CD4-positive, alpha-beta T cell (primary cell): ENCODE measurements at regions of chr17 and their contacts with region 1.

Region 1: GRCh38 chr17:73429440-73430164 is 117.8 kb upstream of the CDC42EP4 start:
- DNase-seq: peak; percentile 74 to 94 (median 87)
- ATAC-seq: peak; percentile 97
- H3K4me3 ChIP-seq: no peak overlapping the region
- H3K4me3 Mint-ChIP-seq: peak overlapping the region; percentile 35
- H3K27ac ChIP-seq: no peak overlapping the region
- H3K27ac Mint-ChIP-seq: no peak overlapping the region
- H3K4me1 ChIP-seq: peaks cover 9% of the 10 kb centered on the region
- H3K4me1 Mint-ChIP-seq: peaks cover 14% of the 10 kb centered on the region
- H3K27me3 ChIP-seq: no peaks in the 10 kb centered on the region
- H3K27me3 Mint-ChIP-seq: no peaks in the 10 kb centered on the region
- CTCF ChIP-seq: peak; percentile 89

Region 2: GRCh38 chr17:73645050-73645978 is 215.7 kb after region 1 on chr17:
- CTCF ChIA-PET with region 1: interaction called, 3 read pairs
- POLR2A ChIA-PET with region 1: no interaction called
- intact Hi-C with region 1: loop called (anchors 1 to 2 kb)
- DNase-seq: peak in 11 of 14 experiments; percentile 13 to 72 (median 48)
- ATAC-seq: peak; percentile 57
- H3K4me3 ChIP-seq: no peak overlapping the region
- H3K4me3 Mint-ChIP-seq: peak overlapping the region; percentile 90
- H3K27ac ChIP-seq: no peak overlapping the region
- H3K27ac Mint-ChIP-seq: no peak overlapping the region
- H3K4me1 ChIP-seq: peaks cover 29% of the 10 kb centered on the region
- H3K4me1 Mint-ChIP-seq: peaks cover 22% of the 10 kb centered on the region
- H3K27me3 ChIP-seq: peaks cover 13 to 32% of the 10 kb centered on the region in 2 experiments
- H3K27me3 Mint-ChIP-seq: peaks cover 7% of the 10 kb centered on the region
- CTCF ChIP-seq: peak; percentile 14

Region 3: DNA sequence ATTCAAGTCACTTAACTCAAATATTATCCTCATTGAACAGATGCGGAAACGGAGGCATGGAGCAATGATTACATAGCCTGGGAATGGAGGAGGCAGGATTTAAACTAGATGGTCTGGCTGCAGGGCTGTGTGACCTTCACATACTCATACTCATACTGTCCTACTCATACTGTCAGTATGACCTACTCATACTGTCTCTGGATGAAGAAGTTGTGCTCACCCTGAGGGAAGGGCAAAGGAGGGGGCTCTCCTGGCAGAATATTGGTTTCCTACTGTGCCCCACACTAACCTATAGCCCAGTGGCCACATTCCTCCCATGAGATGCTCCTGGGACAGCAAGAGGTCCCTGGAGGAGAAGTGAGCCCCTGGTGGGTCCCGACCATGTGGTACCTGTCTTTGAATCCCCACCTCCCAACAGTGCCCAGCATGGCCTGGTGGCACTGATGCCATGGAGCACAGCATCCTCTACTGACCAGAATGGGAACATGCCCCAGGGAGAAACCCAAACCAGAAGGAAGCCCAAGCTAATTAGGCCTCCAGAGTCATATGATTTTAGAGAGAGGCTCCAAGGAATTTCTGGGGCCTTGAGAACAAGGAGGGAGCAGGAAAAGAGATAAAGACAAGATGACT is 411.9 kb after region 1 on chr17:
- CTCF ChIA-PET with region 1: interaction called, 9 read pairs
- POLR2A ChIA-PET with region 1: no interaction called
- intact Hi-C with region 1: loop called (anchors 1 to 2 kb)
- DNase-seq: peak in 8 of 14 experiments; percentile 11 to 49 (median 29)
- ATAC-seq: peak; percentile 73
- H3K4me3 ChIP-seq: no peak overlapping the region
- H3K4me3 Mint-ChIP-seq: no peak overlapping the region
- H3K27ac ChIP-seq: no peak overlapping the region
- H3K27ac Mint-ChIP-seq: no peak overlapping the region
- H3K4me1 ChIP-seq: peaks cover 4% of the 10 kb centered on the region
- H3K4me1 Mint-ChIP-seq: peaks cover 26% of the 10 kb centered on the region
- H3K27me3 ChIP-seq: no peaks in the 10 kb centered on the region
- H3K27me3 Mint-ChIP-seq: no peaks in the 10 kb centered on the region
- CTCF ChIP-seq: peak; percentile 71

Region 4: GRCh38 chr17:73998653-73999645 is 569.3 kb after region 1 on chr17:
- CTCF ChIA-PET with region 1: interaction called, 5 read pairs
- POLR2A ChIA-PET with region 1: no interaction called
- intact Hi-C with region 1: loop called (anchors 1 kb)
- DNase-seq: peak; percentile 53 to 73 (median 62)
- ATAC-seq: peak; percentile 77
- H3K4me3 ChIP-seq: no peak overlapping the region
- H3K4me3 Mint-ChIP-seq: no peak overlapping the region
- H3K27ac ChIP-seq: no peak overlapping the region
- H3K27ac Mint-ChIP-seq: no peak overlapping the region
- H3K4me1 ChIP-seq: no peaks in the 10 kb centered on the region
- H3K4me1 Mint-ChIP-seq: peaks cover 4% of the 10 kb centered on the region
- H3K27me3 ChIP-seq: no peaks in the 10 kb centered on the region
- H3K27me3 Mint-ChIP-seq: peaks cover 17% of the 10 kb centered on the region
- CTCF ChIP-seq: peak; percentile 79

Region 5: GRCh38 chr17:74203439-74204240 is 774.0 kb after region 1 on chr17 and contains the start of gene RPL38:
- CTCF ChIA-PET with region 1: interaction called, 6 read pairs
- POLR2A ChIA-PET with region 1: no interaction called
- intact Hi-C with region 1: loop called in 1 of 2 experiments (anchors 1 kb)
- DNase-seq: peak; percentile 88 to 97 (median 95)
- ATAC-seq: peak; percentile 85
- H3K4me3 ChIP-seq: peak within 1 kb of the TSS; percentile 97
- H3K4me3 Mint-ChIP-seq: peak within 1 kb of the TSS; percentile 94
- H3K27ac ChIP-seq: peak within 1 kb of the TSS; percentile 69 to 87
- H3K27ac Mint-ChIP-seq: peak within 1 kb of the TSS; percentile 82
- H3K4me1 ChIP-seq: peaks cover 59% of the 10 kb centered on the region
- H3K4me1 Mint-ChIP-seq: peaks cover 44% of the 10 kb centered on the region
- H3K27me3 ChIP-seq: peaks cover 18 to 24% of the 10 kb centered on the region in 2 experiments
- H3K27me3 Mint-ChIP-seq: peaks cover 16% of the 10 kb centered on the region
- CTCF ChIP-seq: peak; percentile 89
- total RNA-seq, gene RPL38: 2,305 to 2,531 TPM